Calu3 (cell line): ENCODE measurements at regions of chrX and their contacts with region 1.

Region 1: DNA sequence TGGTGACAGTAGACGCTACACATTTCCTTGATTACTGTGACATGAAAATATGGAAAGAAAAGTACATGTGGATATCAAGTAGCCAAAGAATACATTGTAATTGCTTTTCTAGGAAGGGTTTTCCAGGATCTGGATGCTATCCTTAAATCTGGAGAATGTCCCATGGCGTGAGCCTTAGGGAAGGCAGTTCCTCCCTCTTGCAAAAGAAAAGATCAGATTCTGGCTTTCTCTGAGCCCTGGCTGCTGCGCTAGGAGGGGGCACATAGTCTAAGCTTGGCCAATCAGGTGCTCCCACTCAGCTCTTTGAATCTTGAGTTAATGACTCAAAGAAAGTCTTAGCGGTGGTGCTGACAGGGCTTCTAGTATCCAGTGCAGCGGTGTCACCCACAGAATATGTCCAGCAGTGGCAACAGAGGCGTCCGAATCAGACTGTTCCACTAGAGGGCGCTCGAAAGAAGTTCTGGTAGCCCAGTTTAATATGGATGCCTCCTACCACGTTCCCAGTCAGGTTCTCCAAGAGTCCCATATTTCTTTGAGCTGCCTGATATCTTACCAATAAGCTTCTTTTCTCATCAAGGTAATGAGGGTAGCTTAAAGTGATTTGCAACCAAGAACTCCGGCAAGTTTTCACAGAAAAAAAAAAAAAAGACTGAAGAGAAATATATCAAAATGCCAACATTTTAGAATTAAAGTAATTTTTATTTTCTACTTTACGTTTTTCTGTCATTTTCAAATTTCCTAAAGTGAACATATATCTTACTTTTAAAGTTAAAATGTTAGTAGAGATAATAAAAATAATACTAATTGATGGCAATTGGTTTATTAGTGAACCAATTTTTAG is 213.4 kb upstream of the S100G start:
- DNase-seq: peak; percentile 80
- H3K4me3 Mint-ChIP-seq: no peak overlapping the region
- H3K27ac Mint-ChIP-seq: no peak overlapping the region
- H3K4me1 Mint-ChIP-seq: no peaks in the 10 kb centered on the region
- H3K27me3 Mint-ChIP-seq: no peaks in the 10 kb centered on the region
- CTCF ChIP-seq: peak; percentile 49

Region 2: GRCh38 chrX:16451334-16451733 is 14.8 kb after region 1 on chrX:
- CTCF ChIA-PET with region 1: no interaction called
- intact Hi-C with region 1: no loop called
- DNase-seq: no peak
- H3K4me3 Mint-ChIP-seq: no peak overlapping the region
- H3K27ac Mint-ChIP-seq: no peak overlapping the region
- H3K4me1 Mint-ChIP-seq: no peaks in the 10 kb centered on the region
- H3K27me3 Mint-ChIP-seq: no peaks in the 10 kb centered on the region
- CTCF ChIP-seq: no peak

Region 3: GRCh38 chrX:16670998-16671397 is 234.4 kb after region 1 on chrX:
- CTCF ChIA-PET with region 1: no interaction called
- intact Hi-C with region 1: loop called (anchors 1 kb)
- DNase-seq: peak; percentile 5
- H3K4me3 Mint-ChIP-seq: no peak overlapping the region
- H3K27ac Mint-ChIP-seq: no peak overlapping the region
- H3K4me1 Mint-ChIP-seq: no peaks in the 10 kb centered on the region
- H3K27me3 Mint-ChIP-seq: no peaks in the 10 kb centered on the region
- CTCF ChIP-seq: no peak

Region 4: DNA sequence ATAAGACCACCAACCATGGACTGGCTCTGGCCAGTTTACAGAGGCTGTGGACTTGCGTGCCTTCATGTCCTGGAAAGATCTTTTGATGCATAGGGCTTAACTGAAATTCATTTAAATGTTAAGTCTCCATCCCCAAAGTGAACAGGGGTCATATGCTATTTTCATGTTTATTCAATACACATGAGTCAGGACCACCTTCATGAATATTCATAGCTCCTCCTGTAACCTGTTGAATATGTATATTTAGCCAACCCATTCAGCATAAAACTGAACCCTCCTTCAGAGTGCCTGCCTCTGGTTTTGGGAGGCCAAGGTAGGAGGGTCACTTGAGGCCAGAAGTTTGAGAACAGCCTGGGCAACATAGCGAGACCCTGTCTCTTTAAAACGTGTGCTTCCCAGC is 268.8 kb after region 1 on chrX:
- CTCF ChIA-PET with region 1: no interaction called
- intact Hi-C with region 1: no loop called
- DNase-seq: no peak
- H3K4me3 Mint-ChIP-seq: no peak overlapping the region
- H3K27ac Mint-ChIP-seq: no peak overlapping the region
- H3K4me1 Mint-ChIP-seq: peaks cover 6% of the 10 kb centered on the region
- H3K27me3 Mint-ChIP-seq: no peaks in the 10 kb centered on the region
- CTCF ChIP-seq: no peak

Region 5: DNA sequence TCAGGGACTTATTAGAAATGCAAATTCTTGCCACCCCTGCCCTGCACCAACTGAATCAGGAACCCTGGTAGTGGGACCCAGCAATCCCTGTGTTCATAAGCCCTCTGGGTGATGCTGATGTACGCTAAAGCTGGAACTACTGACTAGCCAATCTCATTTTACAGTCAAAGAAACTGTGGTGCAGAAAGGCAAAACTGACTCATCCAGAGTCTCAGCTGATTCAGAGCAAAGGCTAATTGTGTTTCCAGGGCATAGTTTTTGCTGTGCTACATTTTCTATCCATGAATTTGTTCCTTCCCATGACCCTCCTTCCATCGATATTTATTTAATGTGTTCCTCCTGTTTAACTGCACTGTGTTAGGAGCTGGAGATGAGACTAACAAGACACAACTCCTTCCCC is 717.4 kb after region 1 on chrX:
- CTCF ChIA-PET with region 1: no interaction called
- intact Hi-C with region 1: no loop called
- DNase-seq: no peak
- H3K4me3 Mint-ChIP-seq: no peak overlapping the region
- H3K27ac Mint-ChIP-seq: no peak overlapping the region
- H3K4me1 Mint-ChIP-seq: no peaks in the 10 kb centered on the region
- H3K27me3 Mint-ChIP-seq: no peaks in the 10 kb centered on the region
- CTCF ChIP-seq: no peak